CD4-positive, alpha-beta memory T cell (primary cell): ENCODE measurements at regions of chr1 and their contacts with region 1.

Region 1: DNA sequence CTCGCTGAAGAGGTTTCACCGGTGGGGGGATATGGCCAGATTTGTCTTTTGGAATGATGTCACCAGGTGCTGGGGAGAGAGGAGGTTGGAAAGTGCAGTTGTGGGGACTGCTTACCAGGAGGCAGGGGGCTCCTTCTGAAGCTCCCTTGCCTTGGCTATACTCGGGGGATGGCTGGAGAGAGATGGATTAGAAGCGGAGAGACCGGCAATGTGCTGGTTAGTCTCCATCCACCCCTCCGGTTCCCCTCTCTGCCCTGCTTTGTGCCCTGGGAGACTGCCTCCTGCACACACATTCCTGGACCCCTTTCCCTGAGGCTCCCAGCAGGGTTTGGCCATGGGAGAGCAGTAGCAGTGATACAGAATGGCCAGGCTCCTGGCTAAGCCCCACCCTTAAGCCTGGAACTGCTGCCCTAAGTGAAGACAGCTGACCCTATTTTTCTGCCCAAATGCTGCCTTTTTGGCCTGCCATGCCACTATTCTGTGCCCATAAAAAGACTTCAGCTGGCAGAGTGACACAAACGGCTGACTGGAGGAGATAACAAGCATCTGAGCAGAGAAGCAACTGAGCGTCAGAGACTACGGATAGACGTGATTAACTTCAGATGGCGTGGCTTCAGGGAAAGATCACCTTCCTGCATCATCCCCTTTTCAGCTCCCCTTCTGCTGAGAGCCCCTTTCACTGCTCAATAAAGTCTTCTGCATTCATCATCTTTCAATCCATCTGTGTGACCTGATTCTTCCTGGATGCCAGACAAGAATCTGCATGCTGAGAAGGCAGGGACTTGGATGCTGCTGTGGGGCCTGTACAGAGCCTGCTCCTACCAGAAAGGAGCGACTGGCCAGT is 14.5 kb upstream of the VPS13D start:
- DNase-seq: no peak
- H3K4me3 ChIP-seq: no peak overlapping the region
- H3K4me3 Mint-ChIP-seq: no peak overlapping the region
- H3K27ac ChIP-seq: no peak overlapping the region
- H3K27ac Mint-ChIP-seq: peak overlapping the region in 3 of 7 donors; percentile 32 to 47 (median 41)
- H3K4me1 ChIP-seq: peaks cover 22% of the 10 kb centered on the region
- H3K4me1 Mint-ChIP-seq: peaks cover 17 to 34% (median 19%) of the 10 kb centered on the region in 4 donors
- H3K27me3 ChIP-seq: no peaks in the 10 kb centered on the region
- H3K27me3 Mint-ChIP-seq: peaks cover 0 to 2% of the 10 kb centered on the region in 2 donors

Region 2: GRCh38 chr1:12067900-12068821 is 147.2 kb before region 1 on chr1:
- CTCF ChIA-PET with region 1: no interaction called
- POLR2A ChIA-PET with region 1: no interaction called
- intact Hi-C with region 1: no loop called
- DNase-seq: peak in 1 of 5 donors; percentile 19
- H3K4me3 ChIP-seq: no peak overlapping the region
- H3K4me3 Mint-ChIP-seq: peak overlapping the region in 5 of 8 donors; percentile 43 to 82 (median 58)
- H3K27ac ChIP-seq: no peak overlapping the region
- H3K27ac Mint-ChIP-seq: peak overlapping the region in 2 of 7 donors; percentile 43 to 57
- H3K4me1 ChIP-seq: peaks cover 60% of the 10 kb centered on the region
- H3K4me1 Mint-ChIP-seq: peaks cover 33 to 57% (median 40%) of the 10 kb centered on the region in 4 donors
- H3K27me3 ChIP-seq: peaks cover 7% of the 10 kb centered on the region
- H3K27me3 Mint-ChIP-seq: peaks cover 38 to 51% of the 10 kb centered on the region in 2 donors

Region 3: DNA sequence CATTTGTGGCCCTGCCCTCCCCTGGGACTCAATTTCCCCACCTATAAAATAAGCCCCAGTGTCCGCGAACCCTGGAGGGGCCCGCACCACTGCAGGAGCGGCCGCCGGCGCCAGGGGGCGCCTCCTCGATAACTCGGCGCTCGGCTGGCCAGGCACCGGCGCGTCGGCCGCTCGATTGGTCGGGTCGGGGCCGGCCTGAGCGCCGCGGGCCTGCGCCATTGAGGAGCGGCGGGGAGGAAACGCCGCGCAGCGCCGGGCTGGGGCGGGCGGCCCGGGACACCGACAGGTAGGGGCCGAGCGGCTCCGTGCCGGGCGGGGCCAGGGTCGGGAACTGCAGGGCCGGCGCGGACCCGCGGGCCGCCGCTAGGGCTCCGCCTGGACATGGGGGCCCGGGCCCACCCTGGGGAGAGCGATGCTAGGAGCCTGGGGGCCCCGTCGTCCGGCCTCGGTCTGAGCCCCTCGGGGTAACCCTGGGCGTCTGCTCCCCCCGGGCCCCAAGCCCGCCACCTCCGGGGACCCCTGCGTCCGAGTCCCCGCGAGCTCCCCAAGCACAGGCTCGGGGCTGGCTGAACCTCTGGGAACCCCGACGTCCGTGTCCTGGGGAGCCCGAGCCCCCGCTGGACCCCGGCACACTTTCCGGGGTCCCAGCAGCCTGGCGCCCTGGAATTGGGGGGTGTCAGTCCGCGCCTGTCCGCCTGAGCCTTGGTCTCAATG is 14.7 kb after region 1 on chr1 and contains the start of gene VPS13D:
- CTCF ChIA-PET with region 1: interaction called, 28 read pairs
- POLR2A ChIA-PET with region 1: interaction called, 22 read pairs
- intact Hi-C with region 1: no loop called
- DNase-seq: peak; percentile 76 to 84 (median 83)
- H3K4me3 ChIP-seq: peak within 1 kb of the TSS; percentile 86 to 90
- H3K4me3 Mint-ChIP-seq: peak within 1 kb of the TSS; percentile 88 to 93 (median 91)
- H3K27ac ChIP-seq: peak within 1 kb of the TSS; percentile 82
- H3K27ac Mint-ChIP-seq: peak within 1 kb of the TSS in 6 of 7 donors; percentile 81 to 94 (median 92)
- H3K4me1 ChIP-seq: peaks cover 48% of the 10 kb centered on the region
- H3K4me1 Mint-ChIP-seq: peaks cover 13 to 27% (median 22%) of the 10 kb centered on the region in 4 donors
- H3K27me3 ChIP-seq: no peaks in the 10 kb centered on the region
- H3K27me3 Mint-ChIP-seq: no peaks in the 10 kb centered on the region
- total RNA-seq, gene VPS13D: 92.7 to 96.3 TPM

Region 4: DNA sequence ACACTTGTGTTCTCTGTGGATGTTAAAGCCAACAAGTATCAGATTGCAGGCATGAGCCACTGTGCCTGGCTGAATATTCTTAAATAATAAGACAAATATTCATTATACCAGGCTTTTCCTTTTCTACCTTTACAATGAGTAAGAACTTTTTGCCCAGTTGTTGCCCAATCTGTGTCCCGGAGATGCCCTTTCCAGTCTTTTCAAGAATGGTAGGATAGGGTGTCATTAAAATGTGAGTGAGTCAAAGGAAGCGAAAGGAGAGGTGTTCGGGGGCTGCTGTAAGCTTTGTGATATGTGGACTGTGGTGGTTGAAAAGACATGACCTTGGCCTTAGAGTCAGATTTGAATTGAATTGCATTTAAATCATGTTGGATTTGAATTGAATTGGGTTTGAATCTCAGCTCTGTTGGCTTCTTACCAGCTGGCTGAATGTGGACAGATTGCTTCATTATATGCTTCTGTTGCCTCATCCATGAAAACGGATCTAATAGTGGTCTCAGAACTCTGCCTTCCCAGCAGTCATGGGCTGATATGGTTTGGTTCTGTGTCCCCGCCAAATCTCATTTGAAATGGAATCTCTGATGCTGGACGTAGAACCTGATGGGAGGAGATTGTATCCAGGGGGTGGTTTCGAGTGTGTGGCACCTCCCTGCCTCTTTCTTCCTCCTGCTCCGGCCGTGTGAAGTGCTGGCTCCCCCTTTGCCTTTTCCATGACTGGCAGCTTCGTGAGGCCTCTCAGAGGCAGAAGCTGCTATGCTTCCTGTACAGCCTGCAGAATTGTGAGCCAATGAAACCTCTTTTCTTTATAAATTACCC is 477.8 kb after region 1 on chr1:
- CTCF ChIA-PET with region 1: no interaction called
- POLR2A ChIA-PET with region 1: no interaction called
- intact Hi-C with region 1: no loop called
- DNase-seq: no peak
- H3K4me3 ChIP-seq: no peak overlapping the region
- H3K4me3 Mint-ChIP-seq: no peak overlapping the region
- H3K27ac ChIP-seq: no peak overlapping the region
- H3K27ac Mint-ChIP-seq: no peak overlapping the region
- H3K4me1 ChIP-seq: no peaks in the 10 kb centered on the region
- H3K4me1 Mint-ChIP-seq: no peaks in the 10 kb centered on the region
- H3K27me3 ChIP-seq: no peaks in the 10 kb centered on the region
- H3K27me3 Mint-ChIP-seq: peaks cover 9 to 17% of the 10 kb centered on the region in 2 donors